Common myeloid progenitor, CD34-positive (primary cell): ENCODE measurements at regions of chr5 and their contacts with region 1.

Region 1: GRCh38 chr5:177390363-177391300 is 6.4 kb downstream of the SLC34A1 start:
- DNase-seq: peak; percentile 88 to 96 (median 94)
- H3K4me3 ChIP-seq: no peak overlapping the region
- H3K27ac ChIP-seq: no peak overlapping the region
- H3K4me1 ChIP-seq: peaks cover 3 to 58% (median 37%) of the 10 kb centered on the region in 4 experiments
- H3K27me3 ChIP-seq: no peaks in the 10 kb centered on the region

Region 2: GRCh38 chr5:177351385-177352329 is 39.0 kb before region 1 on chr5 and contains the start of gene LMAN2:
- CTCF ChIA-PET with region 1: interaction called, 15 read pairs
- POLR2A ChIA-PET with region 1: no interaction called
- DNase-seq: peak; percentile 95 to 98 (median 97)
- H3K4me3 ChIP-seq: peak within 1 kb of the TSS; percentile 85 to 99 (median 97)
- H3K27ac ChIP-seq: peak within 1 kb of the TSS; percentile 97 to 99
- H3K4me1 ChIP-seq: peaks cover 10 to 51% (median 40%) of the 10 kb centered on the region in 4 experiments
- H3K27me3 ChIP-seq: no peaks in the 10 kb centered on the region

Region 3: GRCh38 chr5:177370488-177371119 is 20.0 kb before region 1 on chr5:
- CTCF ChIA-PET with region 1: interaction called, 102 read pairs
- POLR2A ChIA-PET with region 1: no interaction called
- DNase-seq: peak; percentile 83 to 85 (median 85)
- H3K4me3 ChIP-seq: peak overlapping the region in 1 of 7 experiments; percentile 72
- H3K27ac ChIP-seq: no peak overlapping the region
- H3K4me1 ChIP-seq: peaks cover 0 to 48% (median 41%) of the 10 kb centered on the region in 4 experiments
- H3K27me3 ChIP-seq: no peaks in the 10 kb centered on the region

Region 4: GRCh38 chr5:177454397-177455035 is 63.9 kb after region 1 on chr5:
- CTCF ChIA-PET with region 1: interaction called, 265 read pairs
- POLR2A ChIA-PET with region 1: interaction called, 6 read pairs
- DNase-seq: peak; percentile 88 to 92 (median 91)
- H3K4me3 ChIP-seq: peak overlapping the region; percentile 68 to 87 (median 77)
- H3K27ac ChIP-seq: peak overlapping the region in 1 of 2 experiments; percentile 68
- H3K4me1 ChIP-seq: peaks cover 0 to 40% (median 39%) of the 10 kb centered on the region in 4 experiments
- H3K27me3 ChIP-seq: no peaks in the 10 kb centered on the region

Region 5: GRCh38 chr5:177504086-177505056 is 113.7 kb after region 1 on chr5:
- CTCF ChIA-PET with region 1: interaction called, 39 read pairs
- POLR2A ChIA-PET with region 1: no interaction called
- DNase-seq: no peak
- H3K4me3 ChIP-seq: no peak overlapping the region
- H3K27ac ChIP-seq: no peak overlapping the region
- H3K4me1 ChIP-seq: peaks cover 0 to 32% (median 30%) of the 10 kb centered on the region in 4 experiments
- H3K27me3 ChIP-seq: no peaks in the 10 kb centered on the region